ENCODE measurements at regions of chr2 and their contacts with region 1.

Region 1: GRCh38 chr2:112254466-112255239 is at the start of gene ZC3H8:
- DNase-seq: peak; percentile 97
- H3K4me3 ChIP-seq: peak within 1 kb of the TSS; percentile 58 to 77 (median 72)
- H3K27ac ChIP-seq: peak within 1 kb of the TSS; percentile 83 to 91 (median 88)
- H3K4me1 ChIP-seq: peaks cover 7 to 21% (median 8%) of the 10 kb centered on the region in 4 donors
- H3K27me3 ChIP-seq: no peaks in the 10 kb centered on the region
- CTCF ChIP-seq: peak in 1 of 5 experiments; percentile 10
- EP300 ChIP-seq: no peak
- POLR2A ChIP-seq: peak; percentile 84
- total RNA-seq, gene ZC3H8: 1.6 to 83.2 (median 12.1) TPM

Region 2: DNA sequence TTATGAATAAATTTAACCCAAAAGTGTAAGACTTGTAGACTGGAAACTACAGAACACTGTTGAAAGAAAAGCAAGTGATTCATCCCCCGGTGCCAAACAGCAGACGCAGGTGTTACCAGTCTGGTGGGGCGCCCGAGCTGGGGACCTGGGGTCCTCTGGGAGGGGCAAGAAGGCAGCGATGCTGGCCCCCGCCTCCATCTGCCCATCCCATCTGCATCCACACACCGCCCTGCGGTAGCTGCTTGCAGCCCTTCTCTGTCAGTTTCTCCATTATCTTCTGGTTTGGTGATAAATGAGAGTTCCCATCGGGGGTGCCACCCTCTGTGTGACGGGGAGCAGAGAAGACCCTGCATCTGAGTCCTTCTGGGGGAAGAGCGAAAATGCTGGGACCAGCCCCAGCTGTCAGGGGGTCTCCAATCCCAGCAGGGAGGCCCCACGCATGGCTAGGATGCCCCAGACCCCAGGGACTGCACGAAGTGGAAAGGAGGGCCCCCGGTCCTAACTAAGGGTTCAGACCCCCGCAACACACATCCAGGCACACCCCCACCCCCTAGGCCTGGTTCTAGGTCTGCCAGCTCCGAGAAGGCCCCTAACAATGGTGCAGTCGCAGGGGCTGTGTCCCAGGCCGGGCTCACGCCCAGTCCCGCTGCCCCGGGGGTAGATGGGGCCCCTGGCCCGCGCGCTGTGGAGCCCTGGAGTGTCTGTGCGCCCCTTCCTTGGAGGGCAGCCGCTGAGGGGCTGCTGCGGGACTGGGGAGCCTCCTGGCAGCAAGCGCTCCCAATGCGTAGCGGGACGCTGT is 179.5 kb after region 1 on chr2:
- in situ Hi-C with region 1: loop called in 1 of 4 experiments (anchors 25 kb)
- intact Hi-C with region 1: loop called (anchors 5 kb)
- DNase-seq: no peak
- H3K4me3 ChIP-seq: no peak overlapping the region
- H3K27ac ChIP-seq: no peak overlapping the region
- H3K4me1 ChIP-seq: peaks cover 0 to 7% (median 3%) of the 10 kb centered on the region in 4 donors
- H3K27me3 ChIP-seq: peaks cover 8% of the 10 kb centered on the region
- CTCF ChIP-seq: no peak
- EP300 ChIP-seq: no peak
- POLR2A ChIP-seq: no peak

Region 3: GRCh38 chr2:112584134-112584890 is 329.7 kb after region 1 on chr2 and contains the start of gene CHCHD5:
- in situ Hi-C with region 1: loop called in 1 of 4 experiments (anchors 25 kb)
- intact Hi-C with region 1: no loop called
- DNase-seq: peak; percentile 95
- H3K4me3 ChIP-seq: peak within 1 kb of the TSS; percentile 48 to 73 (median 56)
- H3K27ac ChIP-seq: peak within 1 kb of the TSS; percentile 87 to 97 (median 94)
- H3K4me1 ChIP-seq: peaks cover 6 to 22% (median 12%) of the 10 kb centered on the region in 4 donors
- H3K27me3 ChIP-seq: no peaks in the 10 kb centered on the region
- CTCF ChIP-seq: peak in 4 of 5 experiments; percentile 16 to 35 (median 28)
- EP300 ChIP-seq: no peak
- POLR2A ChIP-seq: peak; percentile 63
- total RNA-seq, gene CHCHD5: 11.1 to 23.0 (median 17.1) TPM

Measured in transverse colon (tissue), 4 donors.